ENCODE measurements at regions of chr11 and their contacts with region 1.

Region 1: DNA sequence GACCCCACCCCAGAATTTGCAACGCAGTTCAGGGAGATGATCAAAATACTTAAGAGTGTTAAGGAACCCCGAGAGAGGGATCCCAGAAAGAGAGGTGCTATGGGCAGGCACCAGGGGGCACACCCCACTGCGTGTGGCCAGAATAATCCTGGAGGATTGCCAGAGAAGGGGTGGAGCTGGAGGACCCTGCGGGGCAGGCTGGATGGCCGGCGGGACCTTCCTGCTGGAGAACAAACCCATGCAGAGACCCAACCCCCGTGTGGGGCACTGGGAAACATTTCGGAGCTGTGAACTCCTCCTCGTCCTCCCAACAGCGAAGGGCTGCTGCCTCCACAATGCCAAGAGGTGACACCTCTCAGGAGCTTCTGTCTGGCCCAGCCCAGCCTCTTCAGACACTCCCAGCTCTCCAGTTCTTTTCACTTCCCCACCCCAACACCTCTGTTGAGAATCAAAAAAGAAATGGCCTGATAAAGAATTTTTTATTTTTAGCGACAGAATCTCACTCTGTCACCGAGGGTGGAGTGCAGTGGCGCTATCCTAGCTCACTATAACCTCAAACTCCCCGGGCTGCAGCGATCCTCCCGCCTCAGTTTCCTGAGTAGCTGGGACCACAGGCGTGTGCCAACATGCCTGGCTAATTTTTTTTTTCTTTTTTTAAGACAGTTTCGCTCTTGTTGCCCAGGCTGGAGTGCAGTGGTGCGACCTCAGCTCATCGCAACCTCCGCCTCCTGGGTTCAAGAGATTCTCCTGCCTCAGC is 25.6 kb downstream of the RHOD start:
- DNase-seq: no peak
- ATAC-seq: peak; percentile 7
- H3K4me3 Mint-ChIP-seq: peak overlapping the region; percentile 32
- H3K27ac Mint-ChIP-seq: peak overlapping the region; percentile 20
- H3K4me1 Mint-ChIP-seq: peaks cover 14% of the 10 kb centered on the region
- H3K27me3 Mint-ChIP-seq: peaks cover 5% of the 10 kb centered on the region
- CTCF ChIP-seq: no peak

Region 2: DNA sequence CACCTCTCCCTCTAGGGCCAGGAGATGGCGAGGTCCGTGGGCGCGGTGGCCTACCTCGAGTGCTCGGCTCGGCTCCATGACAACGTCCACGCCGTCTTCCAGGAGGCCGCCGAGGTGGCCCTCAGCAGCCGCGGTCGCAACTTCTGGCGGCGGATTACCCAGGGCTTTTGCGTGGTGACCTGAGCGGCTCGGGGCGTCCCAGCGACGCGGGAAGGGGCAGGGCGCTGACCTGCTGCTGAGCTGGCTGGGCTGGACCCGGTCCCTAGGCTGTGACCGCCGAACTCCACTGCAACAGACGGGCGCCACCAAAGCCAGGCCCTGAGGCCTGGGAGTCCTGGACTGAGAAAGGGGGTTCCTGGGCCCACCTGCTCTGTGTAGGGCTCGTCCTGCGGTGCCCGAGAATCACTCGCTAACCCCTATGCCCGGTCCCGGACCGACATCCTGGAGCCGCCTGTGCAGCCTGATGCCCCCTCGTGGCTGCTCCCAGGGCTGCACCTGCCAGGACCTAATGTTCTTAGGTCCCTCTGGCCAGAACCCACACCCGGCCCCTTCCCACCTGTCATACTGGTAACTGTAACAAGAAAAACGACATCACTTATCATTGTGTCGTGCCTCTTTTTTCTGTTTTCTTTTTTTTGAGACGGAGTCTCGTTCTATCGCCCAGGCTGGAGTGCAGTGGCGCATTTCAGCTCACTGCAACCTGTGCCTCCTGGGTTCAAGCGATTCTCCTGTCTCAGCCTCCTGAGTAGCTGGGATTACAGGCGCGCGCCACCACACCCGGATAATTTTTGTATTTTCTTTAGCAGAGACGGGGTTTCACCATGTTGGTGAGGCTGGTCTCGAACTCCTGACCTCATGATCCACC is 10.6 kb before region 1 on chr11:
- CTCF ChIA-PET with region 1: interaction called, 16 read pairs
- POLR2A ChIA-PET with region 1: interaction called, 5 read pairs
- intact Hi-C with region 1: no loop called
- DNase-seq: peak; percentile 91
- ATAC-seq: peak; percentile 99
- H3K4me3 Mint-ChIP-seq: peak overlapping the region; percentile 31
- H3K27ac Mint-ChIP-seq: no peak overlapping the region
- H3K4me1 Mint-ChIP-seq: no peaks in the 10 kb centered on the region
- H3K27me3 Mint-ChIP-seq: no peaks in the 10 kb centered on the region
- CTCF ChIP-seq: peak; percentile 94

Region 3: DNA sequence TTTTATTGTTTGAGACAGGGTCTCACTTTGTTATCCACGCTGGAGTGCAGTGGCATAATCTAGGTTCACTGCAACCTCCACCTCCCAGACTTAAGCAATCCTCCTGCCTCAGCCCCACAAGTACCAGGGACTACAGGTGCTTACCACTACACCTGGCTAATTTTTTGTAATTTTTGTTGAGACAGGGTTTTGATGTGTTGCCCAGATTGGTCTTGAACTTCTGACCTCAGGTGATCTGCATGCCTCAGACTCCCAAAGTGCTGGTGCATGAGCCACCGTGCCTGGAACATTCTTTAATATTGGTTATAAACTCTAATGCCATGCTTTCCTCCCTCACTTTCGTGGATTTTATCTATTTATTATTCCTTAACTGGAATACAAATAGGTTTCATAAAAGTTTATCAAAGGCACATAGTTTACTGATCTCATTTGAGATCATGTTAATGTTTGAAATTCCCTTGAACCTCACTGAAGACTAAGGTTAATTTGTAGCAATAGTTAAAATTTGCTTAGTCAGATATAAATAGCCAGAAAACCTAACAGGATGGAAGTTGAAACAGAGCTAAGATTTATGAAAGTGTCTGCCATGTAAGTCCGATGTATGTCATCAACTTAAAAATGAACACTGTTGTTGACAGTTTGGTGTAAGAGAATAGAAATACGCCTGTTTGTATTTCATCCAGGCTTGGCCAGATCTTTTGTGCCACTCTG is 64.5 kb after region 1 on chr11:
- CTCF ChIA-PET with region 1: interaction called, 10 read pairs
- POLR2A ChIA-PET with region 1: no interaction called
- intact Hi-C with region 1: no loop called
- DNase-seq: no peak
- ATAC-seq: no peak
- H3K4me3 Mint-ChIP-seq: no peak overlapping the region
- H3K27ac Mint-ChIP-seq: peak overlapping the region; percentile 9
- H3K4me1 Mint-ChIP-seq: peaks cover 10% of the 10 kb centered on the region
- H3K27me3 Mint-ChIP-seq: no peaks in the 10 kb centered on the region
- CTCF ChIP-seq: no peak

Region 4: GRCh38 chr11:67158221-67158620 is 76.0 kb after region 1 on chr11:
- CTCF ChIA-PET with region 1: interaction called, 10 read pairs
- POLR2A ChIA-PET with region 1: no interaction called
- intact Hi-C with region 1: no loop called
- DNase-seq: no peak
- ATAC-seq: no peak
- H3K4me3 Mint-ChIP-seq: no peak overlapping the region
- H3K27ac Mint-ChIP-seq: no peak overlapping the region
- H3K4me1 Mint-ChIP-seq: peaks cover 28% of the 10 kb centered on the region
- H3K27me3 Mint-ChIP-seq: no peaks in the 10 kb centered on the region
- CTCF ChIP-seq: no peak

Region 5: GRCh38 chr11:67167086-67167485 is 84.9 kb after region 1 on chr11:
- CTCF ChIA-PET with region 1: interaction called, 17 read pairs
- POLR2A ChIA-PET with region 1: interaction called, 5 read pairs
- intact Hi-C with region 1: loop called (anchors 5 kb)
- DNase-seq: no peak
- ATAC-seq: no peak
- H3K4me3 Mint-ChIP-seq: no peak overlapping the region
- H3K27ac Mint-ChIP-seq: no peak overlapping the region
- H3K4me1 Mint-ChIP-seq: peaks cover 32% of the 10 kb centered on the region
- H3K27me3 Mint-ChIP-seq: no peaks in the 10 kb centered on the region
- CTCF ChIP-seq: no peak